Caco-2 (cell line): ENCODE measurements at regions of chr19 and their contacts with region 1.

Region 1: DNA sequence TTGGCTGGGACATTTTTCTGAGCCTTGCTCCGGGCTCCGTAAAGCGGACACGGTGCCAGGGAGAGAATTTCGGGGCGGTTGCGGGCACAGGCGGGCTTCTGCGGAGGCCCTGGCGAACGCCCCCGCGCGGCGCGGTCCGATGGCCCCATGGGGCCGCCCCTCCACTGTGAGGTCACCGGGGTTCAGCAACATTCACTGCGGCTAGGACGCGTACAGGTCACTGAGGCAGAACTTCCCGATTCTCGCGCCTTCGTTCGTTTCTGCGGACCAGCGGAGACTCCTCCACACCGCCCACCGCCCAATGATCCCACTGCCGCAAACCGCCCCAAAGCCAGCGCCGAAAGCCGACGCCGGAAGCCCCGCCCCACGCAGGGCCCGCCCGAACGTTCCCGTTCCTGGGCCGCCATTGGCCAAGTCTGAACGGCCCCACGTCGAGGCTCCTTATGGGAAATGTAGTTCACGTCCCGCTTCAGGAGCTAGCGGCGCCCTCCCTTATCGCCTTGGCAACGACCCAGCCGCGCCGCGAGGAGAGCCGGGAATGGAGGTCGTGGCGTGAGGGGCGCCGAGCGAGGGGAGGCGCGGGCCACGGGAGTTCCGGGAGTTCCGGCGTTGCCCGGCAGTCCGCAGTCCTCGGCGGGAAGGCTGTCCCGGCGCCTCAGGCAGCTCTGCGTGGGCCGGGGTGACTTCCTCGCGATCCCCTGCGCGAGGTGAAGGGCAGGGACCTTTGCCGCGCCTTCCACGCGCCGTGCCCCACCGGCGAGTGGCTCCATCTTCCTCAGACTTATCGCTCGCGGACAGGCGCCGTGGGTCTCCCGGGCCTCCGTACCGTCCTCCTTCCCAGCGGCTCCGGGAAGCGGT is at the start of gene ZNF584:
- DNase-seq: peak; percentile 94 to 97
- H3K4me3 ChIP-seq: peak within 1 kb of the TSS; percentile 73
- H3K4me3 Mint-ChIP-seq: peak within 1 kb of the TSS; percentile 95
- H3K27ac Mint-ChIP-seq: peak within 1 kb of the TSS; percentile 87
- H3K4me1 ChIP-seq: peaks cover 16% of the 10 kb centered on the region
- H3K4me1 Mint-ChIP-seq: peaks cover 22% of the 10 kb centered on the region
- H3K27me3 ChIP-seq: no peaks in the 10 kb centered on the region
- H3K27me3 Mint-ChIP-seq: no peaks in the 10 kb centered on the region
- CTCF ChIP-seq: no peak
- total RNA-seq, gene ZNF584: 4.9 and 5.7 TPM in 2 replicates

Region 2: DNA sequence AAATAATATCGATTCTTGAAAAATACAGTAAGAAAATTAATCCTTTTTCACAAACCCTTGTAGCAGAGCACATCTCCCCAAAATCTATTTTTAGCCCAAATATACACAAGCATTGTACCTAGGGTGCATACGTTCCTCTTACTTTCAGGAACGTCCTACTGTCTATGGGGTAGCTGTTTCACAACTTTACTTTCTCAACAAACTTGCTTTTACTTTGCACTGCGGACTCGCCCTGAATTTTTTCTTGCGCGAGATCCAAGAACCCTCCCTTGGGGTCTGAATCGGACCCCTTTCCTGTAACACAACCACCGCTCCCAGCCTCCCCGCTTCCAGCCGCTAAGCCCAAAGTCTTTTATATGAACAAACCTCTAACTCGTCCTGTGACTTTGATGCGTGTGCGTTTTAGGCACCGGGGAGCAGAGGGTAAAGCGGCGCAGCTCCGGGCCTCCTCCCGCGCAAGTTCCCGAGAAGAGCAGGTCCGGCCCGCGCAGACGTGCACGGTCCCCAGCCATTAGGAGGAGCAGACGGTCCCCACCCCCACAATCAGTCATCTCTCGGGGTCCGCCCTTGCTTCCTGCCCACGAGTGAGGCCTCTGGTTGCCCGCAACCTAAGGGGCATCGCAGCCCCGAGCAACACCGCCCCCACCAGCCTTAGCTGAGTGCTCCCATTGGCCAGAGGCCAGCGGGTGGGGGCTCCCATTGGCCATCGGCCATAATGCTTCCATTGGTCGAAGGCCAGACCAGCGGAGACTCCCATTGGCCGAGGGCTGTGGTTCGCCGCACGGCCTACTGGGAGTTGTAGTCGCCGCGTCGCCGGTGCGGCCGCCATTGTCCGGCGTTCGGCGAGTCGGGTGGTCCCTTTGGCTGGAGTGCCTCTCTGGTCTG is 130.0 kb before region 1 on chr19 and contains the start of gene ZNF8:
- CTCF ChIA-PET with region 1: no interaction called
- POLR2A ChIA-PET with region 1: no interaction called
- intact Hi-C with region 1: no loop called
- DNase-seq: peak; percentile 99
- H3K4me3 ChIP-seq: peak within 1 kb of the TSS; percentile 85
- H3K4me3 Mint-ChIP-seq: peak within 1 kb of the TSS; percentile 99
- H3K27ac Mint-ChIP-seq: peak within 1 kb of the TSS; percentile 96
- H3K4me1 ChIP-seq: 0 out of 2 replicates have a peak, but pooled peaks cover 5% of the 10 kb centered on the region
- H3K4me1 Mint-ChIP-seq: peaks cover 17% of the 10 kb centered on the region
- H3K27me3 ChIP-seq: no peaks in the 10 kb centered on the region
- H3K27me3 Mint-ChIP-seq: no peaks in the 10 kb centered on the region
- CTCF ChIP-seq: no peak
- total RNA-seq, gene ZNF8: 8.4 and 8.5 TPM in 2 replicates

Region 3: GRCh38 chr19:58451358-58452101 is 43.1 kb after region 1 on chr19 and contains the start of gene ZNF324B:
- CTCF ChIA-PET with region 1: no interaction called
- POLR2A ChIA-PET with region 1: interaction called, 14 read pairs
- intact Hi-C with region 1: loop called (anchors 1 kb)
- DNase-seq: peak; percentile 96 to 97
- H3K4me3 ChIP-seq: peak within 1 kb of the TSS; percentile 72
- H3K4me3 Mint-ChIP-seq: peak within 1 kb of the TSS; percentile 90
- H3K27ac Mint-ChIP-seq: peak within 1 kb of the TSS; percentile 86
- H3K4me1 ChIP-seq: peaks cover 3% of the 10 kb centered on the region; the same call in 1 of the 2 replicates
- H3K4me1 Mint-ChIP-seq: peaks cover 19% of the 10 kb centered on the region
- H3K27me3 ChIP-seq: no peaks in the 10 kb centered on the region
- H3K27me3 Mint-ChIP-seq: no peaks in the 10 kb centered on the region
- CTCF ChIP-seq: no peak
- total RNA-seq, gene ZNF324B: 4.6 and 6.8 TPM in 2 replicates